ENCODE measurements at regions of chr7 and their contacts with region 1.

Region 1: DNA sequence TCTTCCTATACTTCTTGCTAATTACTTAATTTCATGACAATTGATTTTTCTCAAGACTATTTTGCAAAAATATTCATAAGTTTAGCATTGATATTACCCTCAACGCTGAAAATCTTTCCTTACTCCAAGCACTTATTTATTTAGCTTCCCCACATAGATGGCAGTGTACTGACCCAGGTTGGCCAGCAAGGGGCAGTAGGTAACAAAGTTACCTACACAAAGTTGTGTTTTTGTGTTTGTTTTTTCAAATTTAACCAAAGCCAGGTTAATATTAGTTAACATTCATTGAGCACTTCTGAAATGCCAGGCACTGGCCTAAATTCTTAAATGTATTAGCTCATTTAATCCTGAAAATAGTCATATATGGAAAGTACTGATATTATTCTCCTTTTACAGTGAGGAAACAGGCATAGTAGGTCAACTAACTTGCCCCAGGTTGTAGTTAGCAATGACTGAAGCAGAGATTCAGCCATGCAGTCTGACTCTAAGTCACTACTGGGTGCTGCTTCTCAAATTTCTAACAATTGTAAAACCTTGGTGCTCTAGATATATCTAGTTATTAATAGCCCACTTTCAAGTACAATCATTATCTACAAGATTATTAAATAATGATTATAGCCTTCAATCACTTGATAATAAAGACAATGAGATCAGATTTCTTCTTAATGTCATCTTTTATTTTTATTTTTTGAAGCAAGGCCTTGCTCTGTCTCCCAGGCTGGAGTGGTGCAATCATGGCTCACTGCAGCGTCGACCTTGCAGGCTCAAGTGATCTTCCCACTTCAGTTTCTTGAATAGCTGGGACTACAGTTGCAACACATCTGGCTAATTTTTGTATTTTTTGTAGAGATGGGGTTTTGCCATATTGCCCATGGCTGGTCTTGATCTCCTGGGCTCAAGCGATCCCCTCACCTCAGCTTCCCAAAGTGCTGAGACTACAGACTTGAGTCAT is 5.8 kb upstream of the GGCT start:
- DNase-seq: no peak

Region 2: DNA sequence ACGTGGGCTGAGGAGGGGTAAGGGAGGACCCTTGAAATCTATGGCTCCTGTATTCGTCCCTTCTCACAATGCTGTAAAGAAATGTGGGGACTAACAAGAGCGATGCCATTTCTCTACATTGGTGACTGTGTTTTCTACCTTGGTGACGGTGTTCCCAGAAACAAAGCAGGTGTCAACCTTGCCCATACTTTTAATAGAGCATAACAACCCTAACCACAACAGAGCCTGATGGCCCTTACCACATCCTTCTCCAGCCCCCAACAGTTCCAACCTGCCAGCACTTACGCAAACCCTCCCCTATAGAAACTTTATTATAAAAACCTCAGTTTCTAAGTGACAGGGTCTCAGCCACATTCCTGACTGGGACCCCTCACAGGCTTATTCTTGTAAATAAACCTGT is 513.5 kb after region 1 on chr7:
- intact Hi-C with region 1: loop called in 1 of 2 experiments (anchors 5 kb)
- DNase-seq: no peak

Measured in posterior vena cava (tissue), 2 donors.